Heart right ventricle (tissue), 16 donors: ENCODE measurements at regions of chr12 and their contacts with region 1.

Region 1: GRCh38 chr12:38269897-38270296 is 46.7 kb upstream of the ALG10B start:
- DNase-seq: no peak
- ATAC-seq: no peak
- H3K4me3 ChIP-seq: no peak overlapping the region
- H3K27ac ChIP-seq: no peak overlapping the region
- H3K4me1 ChIP-seq: no peaks in the 10 kb centered on the region
- H3K27me3 ChIP-seq: no peaks in the 10 kb centered on the region
- CTCF ChIP-seq: no peak

Region 2: GRCh38 chr12:38175538-38175937 is 94.4 kb before region 1 on chr12:
- intact Hi-C with region 1: loop called in 1 of 10 experiments (anchors 10 kb)
- DNase-seq: no peak
- ATAC-seq: no peak
- H3K4me3 ChIP-seq: no peak overlapping the region
- H3K27ac ChIP-seq: no peak overlapping the region
- H3K4me1 ChIP-seq: no peaks in the 10 kb centered on the region
- H3K27me3 ChIP-seq: peaks cover 0 to 4% (median 0%) of the 10 kb centered on the region in 7 donors
- CTCF ChIP-seq: no peak